Psoas muscle (tissue), 8 donors: ENCODE measurements at regions of chr5 and their contacts with region 1.

Region 1: GRCh38 chr5:148179234-148179824 is 11.0 kb downstream of the SPINK14 start:
- DNase-seq: no peak
- ATAC-seq: peak in 2 of 4 donors; percentile 53 to 74
- H3K4me3 ChIP-seq: no peak overlapping the region
- H3K27ac ChIP-seq: no peak overlapping the region
- H3K4me1 ChIP-seq: no peaks in the 10 kb centered on the region
- H3K27me3 ChIP-seq: no peaks in the 10 kb centered on the region
- CTCF ChIP-seq: peak; percentile 55

Region 2: GRCh38 chr5:148214665-148215185 is 35.4 kb after region 1 on chr5:
- intact Hi-C with region 1: no loop called
- DNase-seq: no peak
- ATAC-seq: no peak
- H3K4me3 ChIP-seq: no peak overlapping the region
- H3K27ac ChIP-seq: no peak overlapping the region
- H3K4me1 ChIP-seq: no peaks in the 10 kb centered on the region
- H3K27me3 ChIP-seq: no peaks in the 10 kb centered on the region
- CTCF ChIP-seq: no peak

Region 3: GRCh38 chr5:148374692-148375360 is 195.5 kb after region 1 on chr5:
- intact Hi-C with region 1: loop called in 1 of 2 experiments (anchors 5 kb)
- DNase-seq: no peak
- ATAC-seq: peak; percentile 57 to 81 (median 75)
- H3K4me3 ChIP-seq: no peak overlapping the region
- H3K27ac ChIP-seq: no peak overlapping the region
- H3K4me1 ChIP-seq: no peaks in the 10 kb centered on the region
- H3K27me3 ChIP-seq: no peaks in the 10 kb centered on the region
- CTCF ChIP-seq: peak; percentile 50

Region 4: DNA sequence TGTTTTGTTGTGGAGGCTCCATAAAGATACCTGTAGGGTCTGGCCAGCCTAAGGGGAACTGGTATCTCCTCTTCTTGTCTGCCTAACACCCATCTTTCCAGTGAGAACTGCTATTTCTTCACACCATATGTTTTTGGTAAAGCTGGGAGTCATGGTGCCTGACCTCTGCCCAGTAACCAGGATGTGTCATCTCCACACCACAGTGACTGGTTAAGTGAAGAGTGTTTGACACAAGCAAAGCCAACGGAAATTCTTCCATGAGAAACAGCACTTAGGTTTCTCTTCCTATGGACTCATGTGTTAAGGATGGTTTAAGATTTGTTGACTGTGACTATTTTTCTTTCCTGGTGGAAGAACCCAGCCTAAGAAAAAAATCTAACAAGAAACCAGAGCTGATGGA is 363.5 kb after region 1 on chr5:
- intact Hi-C with region 1: no loop called
- DNase-seq: no peak
- ATAC-seq: no peak
- H3K4me3 ChIP-seq: no peak overlapping the region
- H3K27ac ChIP-seq: no peak overlapping the region
- H3K4me1 ChIP-seq: no peaks in the 10 kb centered on the region
- H3K27me3 ChIP-seq: no peaks in the 10 kb centered on the region
- CTCF ChIP-seq: no peak